Mucosa of descending colon (tissue), 3 donors: ENCODE measurements at regions of chr3 and their contacts with region 1.

Region 1: GRCh38 chr3:185937689-185938463 is at the start of gene TRA2B:
- DNase-seq: peak; percentile 98 to 99 (median 99)
- ATAC-seq: peak; percentile 98
- H3K4me3 ChIP-seq: peak within 1 kb of the TSS; percentile 98
- H3K4me1 ChIP-seq: peaks cover 20% of the 10 kb centered on the region
- CTCF ChIP-seq: peak; percentile 42
- total RNA-seq, gene TRA2B: 77.0 to 121 (median 92.0) TPM

Region 2: DNA sequence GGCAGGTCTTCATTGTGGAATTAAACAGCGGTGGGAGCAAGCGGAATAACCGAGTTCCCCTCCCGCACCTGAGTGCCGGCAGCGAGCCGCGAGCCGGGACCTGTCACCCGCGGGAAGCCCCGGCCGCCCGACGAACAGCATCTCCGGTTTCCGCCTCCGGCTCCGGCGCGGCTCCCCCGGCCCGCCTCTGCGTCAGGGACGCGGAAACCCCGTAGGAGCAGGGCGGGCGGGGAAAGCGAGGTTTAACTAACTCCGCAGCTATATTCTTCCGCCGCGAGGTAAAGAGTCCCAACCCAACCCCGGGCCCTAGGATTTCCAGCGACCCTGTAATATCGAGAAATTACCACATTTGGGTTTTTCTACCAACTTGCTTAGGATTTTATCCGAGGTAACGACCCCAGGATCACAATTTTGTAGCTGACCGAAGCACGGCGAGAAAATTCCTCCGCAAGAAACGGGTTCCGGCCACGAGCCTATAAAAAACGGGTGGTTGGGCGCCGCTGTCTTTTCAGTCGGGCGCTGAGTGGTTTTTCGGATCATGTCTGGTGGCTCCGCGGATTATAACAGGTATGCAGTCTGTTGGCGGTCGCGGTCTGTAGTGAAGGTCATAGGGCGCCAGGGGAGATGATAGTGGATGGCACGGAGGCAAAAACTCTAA is 845.3 kb after region 1 on chr3 and contains the start of gene EIF4A2:
- intact Hi-C with region 1: loop called in 1 of 2 experiments (anchors 10 kb)
- DNase-seq: peak; percentile 90 to 94 (median 94)
- ATAC-seq: peak; percentile 93
- H3K4me3 ChIP-seq: peak within 1 kb of the TSS; percentile 86
- H3K4me1 ChIP-seq: peaks cover 30% of the 10 kb centered on the region
- CTCF ChIP-seq: no peak
- total RNA-seq, gene EIF4A2: 218 to 536 (median 316) TPM